Dorsolateral prefrontal cortex (tissue), 120 donors: ENCODE measurements at regions of chr4 and their contacts with region 1.

Region 1: DNA sequence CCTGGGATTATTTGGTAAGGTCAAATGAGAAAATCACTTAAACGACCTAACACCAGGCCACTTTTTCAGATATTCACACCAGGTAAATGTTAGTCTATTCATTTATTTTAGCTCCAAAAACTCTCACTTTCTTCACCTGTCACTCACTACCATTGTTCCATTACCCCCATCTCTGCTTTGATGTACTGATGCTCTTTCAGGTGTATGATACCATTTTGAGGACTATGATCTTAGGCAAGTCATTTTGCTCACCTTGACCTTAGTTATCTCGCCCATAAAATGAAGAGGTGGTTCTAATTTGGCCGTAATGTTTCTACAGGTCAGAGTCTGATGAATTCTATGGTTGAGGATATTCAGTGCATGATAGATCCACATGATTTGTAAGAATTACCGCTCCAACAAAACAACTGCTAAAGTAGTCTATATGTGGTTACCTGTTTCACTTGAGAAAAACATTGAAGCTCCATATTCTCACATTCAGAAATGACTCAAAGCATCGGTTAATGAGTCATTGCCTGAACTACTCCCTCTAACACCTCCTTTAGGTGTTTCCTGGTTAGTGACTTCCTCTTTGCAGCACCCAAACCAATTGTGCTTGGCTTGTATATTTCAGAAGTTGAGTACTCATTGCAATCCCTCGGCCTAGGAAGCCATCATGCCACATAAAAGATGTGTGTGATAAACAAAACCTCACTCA is 4.5 kb downstream of the DTHD1 start:
- DNase-seq: no peak
- H3K4me3 ChIP-seq: no peak overlapping the region
- H3K27ac ChIP-seq: peak overlapping the region in 51 of 59 donors; percentile 24 to 99 (median 94)
- H3K27me3 ChIP-seq: no peaks in the 10 kb centered on the region
- CTCF ChIP-seq: no peak

Region 2: DNA sequence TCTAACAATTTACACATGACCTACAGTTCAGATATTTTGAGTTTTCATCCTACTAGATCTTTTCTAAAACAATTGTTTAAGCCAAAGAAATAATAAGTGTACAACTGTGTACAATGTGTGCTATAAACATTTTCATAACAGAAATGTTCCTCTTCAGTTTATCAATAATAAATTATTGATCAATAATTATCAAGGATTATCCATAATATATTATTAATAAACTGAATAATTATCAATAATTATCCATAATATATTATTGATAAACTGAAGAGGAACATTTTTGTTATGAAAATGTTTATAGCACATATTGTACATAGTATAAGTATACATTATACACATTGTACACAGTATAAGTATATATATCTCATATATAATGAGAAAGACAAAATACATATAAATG is 602.2 kb before region 1 on chr4:
- intact Hi-C with region 1: no loop called
- DNase-seq: no peak
- H3K4me3 ChIP-seq: no peak overlapping the region
- H3K27ac ChIP-seq: no peak overlapping the region
- H3K27me3 ChIP-seq: no peaks in the 10 kb centered on the region
- CTCF ChIP-seq: no peak

Region 3: DNA sequence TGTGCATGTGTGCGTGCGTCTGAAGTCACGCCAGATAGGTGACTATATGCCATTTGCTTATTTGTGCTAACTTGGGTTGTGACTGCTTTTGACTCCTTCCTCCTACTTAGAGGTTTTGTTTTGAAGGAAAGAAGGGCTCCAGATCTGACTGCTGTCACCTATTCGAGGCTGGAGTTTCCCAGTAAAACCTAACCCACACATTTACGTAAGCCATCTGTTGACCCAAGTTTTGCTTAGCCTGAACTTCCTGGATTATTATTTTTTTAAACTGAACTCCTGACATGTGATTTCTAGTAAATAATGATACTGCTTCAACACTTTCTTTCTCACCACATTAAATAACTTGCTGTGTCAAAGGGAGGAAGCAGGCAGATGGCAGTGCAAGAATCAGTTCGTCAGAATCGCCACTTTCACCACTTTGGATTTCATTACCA is 37.0 kb after region 1 on chr4:
- intact Hi-C with region 1: loop called in 1 of 2 experiments (anchors 5 kb)
- DNase-seq: no peak
- H3K4me3 ChIP-seq: no peak overlapping the region
- H3K27ac ChIP-seq: peak overlapping the region in 37 of 59 donors; percentile 4 to 68 (median 27)
- H3K27me3 ChIP-seq: no peaks in the 10 kb centered on the region
- CTCF ChIP-seq: peak in 1 of 56 donors; percentile 23

Region 4: DNA sequence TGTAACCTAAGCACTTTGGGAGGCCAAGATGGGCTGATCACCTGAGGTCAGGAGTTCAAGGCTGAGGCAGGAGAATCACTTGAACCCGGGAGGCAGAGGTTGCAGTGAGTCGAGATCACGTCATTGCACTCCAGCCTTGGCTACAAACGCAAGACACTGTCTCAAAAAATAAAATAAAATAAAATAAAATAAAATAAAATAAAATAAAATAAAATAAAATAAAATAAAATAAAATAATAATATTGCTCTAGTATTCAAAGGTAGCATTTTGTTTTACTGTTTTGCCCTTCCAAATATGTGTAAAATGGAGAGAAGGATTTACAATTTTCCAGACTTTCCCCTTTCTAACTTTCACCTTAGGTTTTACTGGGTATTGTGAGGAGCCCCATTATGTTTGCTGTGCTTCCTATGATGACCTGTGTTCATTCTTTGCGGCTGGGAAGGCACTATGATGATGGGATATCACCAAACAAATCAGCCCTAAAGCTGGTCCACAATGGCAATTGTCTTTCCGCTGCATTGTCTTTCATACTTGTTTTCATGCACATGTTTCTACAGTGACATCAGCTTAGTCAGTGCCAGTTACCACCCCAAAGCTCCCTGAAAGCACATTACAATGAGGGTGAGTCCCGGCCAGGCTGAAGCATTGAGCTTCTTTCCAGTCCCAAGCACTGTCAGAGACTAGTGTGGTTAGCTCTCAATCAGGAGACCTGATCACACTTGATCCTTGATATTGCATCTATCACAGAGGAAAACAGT is 46.3 kb after region 1 on chr4:
- intact Hi-C with region 1: loop called (anchors 1 to 2 kb)
- DNase-seq: peak; percentile 5 to 87 (median 68)
- H3K4me3 ChIP-seq: peak overlapping the region in 5 of 59 donors; percentile 3 to 35 (median 28)
- H3K27ac ChIP-seq: peak overlapping the region; percentile 52 to 98 (median 92)
- H3K27me3 ChIP-seq: no peaks in the 10 kb centered on the region
- CTCF ChIP-seq: peak in 3 of 56 donors; percentile 11 to 30 (median 15)